BJ (cell line): ENCODE measurements at regions of chr1 and their contacts with region 1.

Region 1: DNA sequence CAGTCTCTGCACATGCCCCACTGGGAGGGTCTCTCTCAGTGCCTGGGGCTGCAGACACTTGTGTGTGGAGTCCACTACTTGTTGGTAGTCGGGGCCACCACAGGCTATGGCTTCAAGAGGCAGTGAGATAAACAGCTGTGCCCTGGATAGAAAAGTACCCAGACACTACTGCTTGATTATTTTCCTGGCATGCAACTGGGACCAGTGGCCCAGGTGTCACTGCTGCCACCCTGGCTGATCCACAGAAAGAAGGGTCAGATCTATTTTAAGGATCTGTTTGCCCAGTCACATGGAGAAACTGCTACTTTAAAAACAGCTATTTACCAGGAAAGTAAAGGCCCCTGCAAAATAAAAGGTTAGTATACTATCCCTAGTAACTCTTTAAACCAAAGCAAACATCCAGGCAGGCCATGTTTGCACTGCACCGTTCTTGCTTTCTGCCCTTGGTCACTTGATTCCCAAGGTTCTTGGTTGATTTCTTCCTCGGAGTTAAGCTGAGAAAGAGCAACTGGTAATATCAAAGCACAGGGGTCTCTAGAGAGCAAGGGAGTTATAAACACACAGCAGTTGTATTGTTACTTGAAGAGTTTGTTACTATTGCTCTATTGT is 99.9 kb downstream of the GLUL start:
- DNase-seq: no peak
- H3K4me3 ChIP-seq: no peak overlapping the region
- H3K27me3 ChIP-seq: no peaks in the 10 kb centered on the region
- CTCF ChIP-seq: no peak

Region 2: DNA sequence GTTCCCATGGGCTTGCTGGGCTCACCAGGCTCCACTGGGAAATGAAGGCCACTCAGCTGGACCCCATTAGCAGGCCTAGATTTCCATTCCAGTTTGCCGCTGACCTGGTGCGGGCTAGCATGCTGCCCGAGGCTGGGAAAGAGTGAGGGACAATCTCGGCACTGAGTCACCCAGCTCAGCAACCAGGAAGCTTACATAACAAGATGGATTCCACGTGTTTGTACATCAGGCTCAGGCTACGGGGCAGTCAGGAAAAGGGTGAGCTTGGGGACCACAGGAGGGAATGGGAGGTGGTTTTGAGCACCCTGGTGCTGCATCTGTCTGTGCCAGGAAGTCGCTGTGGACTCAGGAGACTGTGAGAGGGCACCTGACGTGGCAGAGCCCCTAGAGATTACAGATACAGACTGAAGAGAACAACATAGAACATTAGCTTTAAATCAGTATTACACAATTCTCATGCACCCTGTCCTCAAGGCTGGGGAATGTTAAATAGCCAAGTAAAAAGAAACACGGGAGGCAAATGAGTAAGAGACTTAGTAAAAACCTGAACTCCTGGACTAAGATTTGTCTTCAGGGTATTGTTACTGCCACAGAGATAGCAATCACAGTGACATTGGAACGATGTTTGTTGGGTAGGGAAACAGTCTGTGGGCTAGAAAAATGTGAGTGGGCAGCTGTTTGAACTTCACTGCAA is 48.7 kb after region 1 on chr1:
- CTCF ChIA-PET with region 1: no interaction called
- POLR2A ChIA-PET with region 1: interaction called, 13 read pairs
- DNase-seq: peak; percentile 77
- H3K4me3 ChIP-seq: no peak overlapping the region
- H3K27me3 ChIP-seq: no peaks in the 10 kb centered on the region
- CTCF ChIP-seq: no peak

Region 3: GRCh38 chr1:182397771-182398393 is 106.2 kb after region 1 on chr1:
- CTCF ChIA-PET with region 1: interaction called, 11 read pairs
- POLR2A ChIA-PET with region 1: no interaction called
- DNase-seq: no peak
- H3K4me3 ChIP-seq: no peak overlapping the region
- H3K27me3 ChIP-seq: no peaks in the 10 kb centered on the region
- CTCF ChIP-seq: no peak

Region 4: DNA sequence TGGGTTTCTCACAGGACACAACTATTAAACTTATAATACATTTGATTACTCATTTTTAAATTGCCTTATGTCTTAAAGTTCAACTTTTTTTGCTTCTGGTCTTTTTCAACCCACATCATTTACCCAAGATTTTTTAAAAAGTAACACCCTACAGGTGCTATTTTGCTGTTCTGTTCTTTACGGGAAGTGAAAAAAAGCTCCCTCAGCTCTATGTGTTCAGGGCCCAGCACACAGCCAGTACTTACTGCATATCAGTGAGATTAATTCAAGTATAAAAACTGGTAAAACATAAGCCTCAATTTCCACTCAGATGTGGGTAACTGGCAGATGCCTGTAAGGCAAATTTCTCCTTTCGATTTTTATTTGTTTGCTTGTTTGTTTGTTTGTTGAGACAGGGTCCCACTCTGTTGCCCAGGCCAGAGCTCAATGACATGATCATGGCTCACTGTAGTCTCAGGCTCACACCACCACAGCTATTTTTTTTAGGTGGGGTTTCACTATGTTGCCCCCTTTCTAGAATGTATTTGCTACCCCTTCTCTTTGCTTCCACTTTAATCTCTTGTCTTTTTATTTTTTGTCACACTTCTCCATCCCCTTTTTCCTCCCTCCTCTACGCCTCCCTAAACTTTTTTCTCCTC is 277.1 kb after region 1 on chr1:
- CTCF ChIA-PET with region 1: no interaction called
- POLR2A ChIA-PET with region 1: no interaction called
- DNase-seq: no peak
- H3K4me3 ChIP-seq: no peak overlapping the region
- H3K27me3 ChIP-seq: no peaks in the 10 kb centered on the region
- CTCF ChIP-seq: no peak